IMR-90 (cell line): ENCODE measurements at regions of chr2 and their contacts with region 1.

Region 1: GRCh38 chr2:65040400-65041261 is 15.6 kb upstream of the CEP68 start:
- DNase-seq: peak; percentile 84
- ATAC-seq: peak; percentile 100
- H3K4me3 ChIP-seq: peak overlapping the region; percentile 26; the same call in 1 of the 2 replicates
- H3K27ac ChIP-seq: no peak overlapping the region
- H3K4me1 ChIP-seq: no peaks in the 10 kb centered on the region
- H3K27me3 ChIP-seq: no peaks in the 10 kb centered on the region
- CTCF ChIP-seq: peak; percentile 89
- POLR2A ChIP-seq: no peak
- RAD21 ChIP-seq: peak; percentile 93

Region 2: DNA sequence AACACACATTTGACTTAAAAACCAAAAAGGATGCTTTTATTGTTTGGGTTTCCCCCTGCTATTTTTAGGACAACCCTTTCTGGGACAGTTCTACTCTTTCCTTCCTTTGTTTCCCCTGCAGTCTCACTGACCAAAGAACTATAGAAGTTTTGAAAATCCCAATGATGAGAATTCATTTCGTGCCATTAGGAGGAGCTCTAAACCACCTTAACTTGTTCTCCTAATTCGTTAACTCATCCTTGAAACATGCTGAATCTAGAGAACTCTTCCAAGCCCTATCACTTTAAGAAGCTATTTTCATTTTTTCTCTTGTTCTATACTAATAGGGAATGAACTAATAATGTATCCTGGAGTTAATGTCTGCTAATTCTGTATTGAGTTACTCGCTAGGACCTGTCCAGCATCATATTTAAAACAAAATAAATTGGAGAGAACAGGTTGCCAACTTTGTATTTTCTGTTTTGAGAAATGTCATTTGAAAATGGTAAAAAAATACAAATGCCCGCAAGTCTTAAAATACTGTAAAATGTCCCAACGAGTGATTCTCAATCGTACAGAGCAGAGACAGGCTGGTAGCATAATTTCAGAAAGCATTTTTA is 453.6 kb before region 1 on chr2:
- CTCF ChIA-PET with region 1: no interaction called
- POLR2A ChIA-PET with region 1: no interaction called
- dilution Hi-C with region 1: no loop called
- in situ Hi-C with region 1: loop called (anchors 10 kb)
- intact Hi-C with region 1: loop called (anchors 5 kb)
- DNase-seq: peak; percentile 72
- ATAC-seq: peak; percentile 80
- H3K4me3 ChIP-seq: no peak overlapping the region
- H3K27ac ChIP-seq: no peak overlapping the region
- H3K4me1 ChIP-seq: no peaks in the 10 kb centered on the region
- H3K27me3 ChIP-seq: no peaks in the 10 kb centered on the region
- CTCF ChIP-seq: peak; percentile 77
- POLR2A ChIP-seq: no peak
- RAD21 ChIP-seq: peak; percentile 87

Region 3: GRCh38 chr2:64595397-64596160 is 445.1 kb before region 1 on chr2:
- CTCF ChIA-PET with region 1: no interaction called
- POLR2A ChIA-PET with region 1: no interaction called
- dilution Hi-C with region 1: no loop called
- in situ Hi-C with region 1: loop called (anchors 10 kb)
- intact Hi-C with region 1: no loop called
- DNase-seq: peak; percentile 17
- ATAC-seq: no peak; the same call in 1 of the 2 replicates
- H3K4me3 ChIP-seq: no peak overlapping the region
- H3K27ac ChIP-seq: no peak overlapping the region
- H3K4me1 ChIP-seq: peaks cover 6% of the 10 kb centered on the region
- H3K27me3 ChIP-seq: peaks cover 36% of the 10 kb centered on the region
- CTCF ChIP-seq: peak; percentile 49
- POLR2A ChIP-seq: no peak
- RAD21 ChIP-seq: peak; percentile 39

Region 4: GRCh38 chr2:64988420-64989125 is 52.1 kb before region 1 on chr2:
- CTCF ChIA-PET with region 1: no interaction called
- POLR2A ChIA-PET with region 1: no interaction called
- dilution Hi-C with region 1: no loop called
- in situ Hi-C with region 1: no loop called
- intact Hi-C with region 1: loop called (anchors 5 kb)
- DNase-seq: peak; percentile 89
- ATAC-seq: peak; percentile 80
- H3K4me3 ChIP-seq: peak overlapping the region; percentile 64
- H3K27ac ChIP-seq: peak overlapping the region; percentile 84
- H3K4me1 ChIP-seq: peaks cover 10% of the 10 kb centered on the region
- H3K27me3 ChIP-seq: no peaks in the 10 kb centered on the region
- CTCF ChIP-seq: peak; percentile 42
- POLR2A ChIP-seq: peak; percentile 93
- RAD21 ChIP-seq: peak; percentile 12; the same call in 1 of the 2 replicates

Region 5: DNA sequence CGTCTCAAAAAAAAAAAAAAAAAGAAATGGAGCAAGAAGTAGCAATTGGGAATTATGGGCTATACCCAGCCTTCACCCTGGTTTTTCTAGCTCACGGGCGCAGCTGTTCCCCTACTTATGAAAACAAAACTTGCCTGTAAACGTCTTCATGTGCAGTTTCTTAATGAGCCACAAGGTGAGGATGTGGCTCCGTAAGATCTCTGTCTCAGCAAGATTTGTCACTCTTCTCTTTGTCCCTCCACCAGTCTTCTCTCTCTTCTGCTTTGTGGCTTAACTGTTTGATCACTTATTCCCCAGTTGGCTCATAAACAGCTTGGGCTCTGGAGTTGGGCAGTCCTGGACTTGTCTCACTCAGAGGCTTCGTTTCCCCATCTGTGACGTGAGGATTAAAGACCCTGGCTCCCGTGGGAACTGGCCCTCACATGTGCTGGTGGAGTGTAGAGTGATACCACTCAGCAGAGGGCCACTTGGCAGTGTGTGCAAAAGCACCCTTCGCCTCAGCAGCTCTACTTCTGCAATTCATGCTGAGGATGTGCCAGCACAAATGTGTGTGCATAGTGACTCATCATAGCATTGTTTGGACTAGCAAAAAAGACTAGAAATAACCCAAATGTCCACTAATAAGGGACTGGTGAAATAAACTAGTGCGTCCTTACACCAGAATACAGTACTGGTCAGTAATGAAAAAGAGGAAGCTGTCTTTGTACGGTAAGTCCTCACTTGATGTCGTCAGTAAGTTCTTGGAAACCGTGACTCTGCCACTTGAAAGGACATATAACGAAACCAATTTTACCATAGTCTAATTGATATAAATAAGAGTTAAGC is 24.3 kb after region 1 on chr2:
- CTCF ChIA-PET with region 1: no interaction called
- POLR2A ChIA-PET with region 1: no interaction called
- dilution Hi-C with region 1: no loop called
- in situ Hi-C with region 1: no loop called
- intact Hi-C with region 1: no loop called
- DNase-seq: peak; percentile 96
- ATAC-seq: peak; percentile 83
- H3K4me3 ChIP-seq: no peak overlapping the region
- H3K27ac ChIP-seq: peak overlapping the region; percentile 35; the same call in 1 of the 2 replicates
- H3K4me1 ChIP-seq: peaks cover 26% of the 10 kb centered on the region
- H3K27me3 ChIP-seq: no peaks in the 10 kb centered on the region
- CTCF ChIP-seq: peak; percentile 52
- POLR2A ChIP-seq: peak; percentile 14; the same call in 1 of the 2 replicates
- RAD21 ChIP-seq: peak; percentile 62